Activated T-helper 2 cell treated with anti-CD3 and anti-CD28 coated beads, Interferon-gamma antibody, Interleukin-2, Interleukin-4, amounts not matched to agents 10 μg/mL and 5 μg/mL and 100 μg/mL, durations not matched to agents 14 hours and 24 hours and 36 hours (primary cell): ENCODE measurements at regions of chr17 and their contacts with region 1.

Region 1: DNA sequence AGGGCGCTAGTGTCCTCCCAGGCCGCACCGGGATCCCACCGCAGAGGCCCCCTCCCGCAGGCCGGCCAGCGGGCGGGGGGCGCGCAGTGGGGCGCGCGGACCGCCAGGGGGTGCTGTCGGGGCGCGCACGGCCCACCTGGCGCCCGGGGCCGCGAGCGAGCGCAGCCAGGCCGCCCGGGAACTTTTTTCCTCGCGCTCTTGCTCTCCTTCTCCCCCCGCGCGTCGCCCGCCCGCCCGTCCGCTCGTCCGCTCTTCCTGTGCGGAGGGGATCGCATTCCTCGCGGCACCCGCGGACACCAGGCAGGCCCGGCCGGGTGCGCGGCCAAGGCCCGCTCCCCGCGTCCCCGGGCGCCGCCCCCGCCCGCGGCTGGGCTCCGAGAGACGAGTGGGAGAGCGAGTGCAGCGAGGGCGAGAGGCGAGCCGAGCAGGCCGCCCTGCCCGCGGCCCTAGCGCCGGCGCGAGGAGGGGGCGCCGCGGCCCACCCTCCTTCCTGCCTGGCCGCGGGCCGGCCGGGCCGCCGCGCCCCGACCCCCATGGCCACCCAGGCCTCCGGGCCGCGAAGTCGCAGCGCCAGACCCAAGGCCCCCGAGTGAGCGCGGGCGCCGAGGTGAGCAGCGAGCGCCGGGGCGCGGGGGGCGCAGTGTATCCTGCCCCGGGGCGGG is at the start of gene RAI1:
- DNase-seq: peak; percentile 68
- H3K4me3 Mint-ChIP-seq: peak within 1 kb of the TSS; percentile 85
- H3K27ac Mint-ChIP-seq: peak within 1 kb of the TSS; percentile 85
- H3K4me1 Mint-ChIP-seq: peaks cover 28% of the 10 kb centered on the region
- H3K27me3 Mint-ChIP-seq: peaks cover 11% of the 10 kb centered on the region
- total RNA-seq, gene RAI1: 33.5 and 36.5 TPM in 2 replicates

Region 2: GRCh38 chr17:17580662-17581470 is 100.5 kb before region 1 on chr17:
- intact Hi-C with region 1: no loop called
- DNase-seq: no peak
- H3K4me3 Mint-ChIP-seq: no peak overlapping the region
- H3K27ac Mint-ChIP-seq: no peak overlapping the region
- H3K4me1 Mint-ChIP-seq: no peaks in the 10 kb centered on the region
- H3K27me3 Mint-ChIP-seq: no peaks in the 10 kb centered on the region

Region 3: GRCh38 chr17:17605729-17606088 is 75.6 kb before region 1 on chr17:
- intact Hi-C with region 1: no loop called
- DNase-seq: no peak
- H3K4me3 Mint-ChIP-seq: no peak overlapping the region
- H3K27ac Mint-ChIP-seq: no peak overlapping the region
- H3K4me1 Mint-ChIP-seq: no peaks in the 10 kb centered on the region
- H3K27me3 Mint-ChIP-seq: no peaks in the 10 kb centered on the region

Region 4: GRCh38 chr17:17648762-17649161 is 32.6 kb before region 1 on chr17:
- intact Hi-C with region 1: no loop called
- DNase-seq: no peak
- H3K4me3 Mint-ChIP-seq: no peak overlapping the region
- H3K27ac Mint-ChIP-seq: no peak overlapping the region
- H3K4me1 Mint-ChIP-seq: no peaks in the 10 kb centered on the region
- H3K27me3 Mint-ChIP-seq: no peaks in the 10 kb centered on the region

Region 5: GRCh38 chr17:17723354-17724261 is 42.3 kb after region 1 on chr17:
- intact Hi-C with region 1: loop called (anchors 5 kb)
- DNase-seq: no peak
- H3K4me3 Mint-ChIP-seq: peak overlapping the region; percentile 82
- H3K27ac Mint-ChIP-seq: no peak overlapping the region
- H3K4me1 Mint-ChIP-seq: peaks cover 25% of the 10 kb centered on the region
- H3K27me3 Mint-ChIP-seq: peaks cover 31% of the 10 kb centered on the region

Region 6: DNA sequence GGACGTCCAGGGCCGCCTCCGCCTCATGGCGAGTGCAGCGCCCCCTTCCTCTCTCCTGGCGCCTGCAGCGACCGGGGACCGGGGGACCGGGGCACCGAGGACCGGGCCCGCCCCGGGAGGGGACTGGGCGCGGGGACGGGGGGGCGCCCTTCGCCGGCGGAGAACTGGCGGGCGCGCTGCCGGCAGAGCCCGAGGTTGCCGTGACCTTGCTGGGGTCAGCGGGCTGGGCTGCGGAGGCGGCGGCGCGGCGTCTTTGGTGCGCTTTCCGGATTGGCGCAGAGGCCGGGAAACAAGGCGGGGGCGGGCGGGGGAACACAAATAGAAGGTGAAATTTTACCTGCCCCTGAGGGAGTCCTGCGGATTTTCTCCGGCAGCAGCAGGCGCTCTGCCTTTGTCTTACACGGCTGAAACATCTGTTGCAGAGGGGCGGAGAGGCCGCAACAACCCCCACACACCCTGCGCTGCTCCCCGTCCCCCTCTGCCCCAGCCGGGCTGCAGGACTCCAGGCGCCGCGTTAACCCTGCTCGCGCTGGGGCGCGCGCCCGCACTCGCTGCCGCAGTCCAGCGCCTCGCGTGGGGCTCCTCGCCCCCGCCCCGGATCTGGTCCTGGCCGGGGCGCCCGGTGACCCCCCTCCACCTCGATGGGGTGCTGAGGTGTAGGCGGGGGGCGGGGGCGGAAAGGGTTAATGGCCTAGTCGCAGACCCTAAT is 102.0 kb after region 1 on chr17:
- intact Hi-C with region 1: loop called (anchors 2 kb)
- DNase-seq: peak; percentile 53
- H3K4me3 Mint-ChIP-seq: peak overlapping the region; percentile 45
- H3K27ac Mint-ChIP-seq: no peak overlapping the region
- H3K4me1 Mint-ChIP-seq: peaks cover 6% of the 10 kb centered on the region
- H3K27me3 Mint-ChIP-seq: peaks cover 21% of the 10 kb centered on the region

Region 7: DNA sequence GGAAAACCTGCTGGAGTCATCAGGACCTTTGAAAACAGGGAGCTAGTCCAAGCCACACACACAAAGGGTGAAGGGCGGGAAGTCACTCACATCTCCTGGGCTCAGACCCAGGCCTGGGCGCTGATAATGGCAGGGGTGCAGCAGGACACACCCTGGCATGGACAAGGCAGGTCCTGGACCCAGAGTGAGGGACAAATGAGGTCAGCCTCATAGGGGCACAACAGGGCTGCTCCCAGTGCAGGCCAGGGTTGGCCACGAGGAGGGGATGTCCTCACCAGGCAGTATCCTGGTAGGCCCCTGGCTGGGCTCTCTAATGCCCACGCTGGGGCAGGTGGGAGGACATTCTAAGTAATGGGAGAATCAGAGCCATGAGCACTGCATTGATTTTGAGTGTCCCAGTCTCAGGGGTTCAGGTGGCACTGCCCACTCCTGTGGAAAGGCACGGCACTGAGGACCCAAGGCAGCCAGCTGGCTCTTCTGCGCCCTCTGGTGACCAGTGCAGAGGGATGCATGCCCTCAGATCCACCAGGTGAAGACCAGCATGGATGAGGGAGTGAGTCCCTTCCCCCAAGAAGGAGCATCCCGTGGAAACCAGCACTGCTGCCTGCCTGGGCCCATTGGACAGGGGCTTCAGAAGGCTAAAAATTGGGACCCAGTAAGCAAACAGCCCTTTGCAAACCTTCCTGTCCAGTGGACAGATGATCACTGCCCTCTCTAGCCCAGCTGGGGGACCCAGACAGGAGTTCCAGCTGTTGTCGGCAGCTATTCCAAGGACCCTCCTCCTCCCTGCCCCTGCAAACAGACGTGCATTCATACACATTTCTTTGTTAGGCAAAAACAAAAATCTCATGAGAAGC is 178.8 kb after region 1 on chr17:
- intact Hi-C with region 1: loop called (anchors 2 kb)
- DNase-seq: peak; percentile 50
- H3K4me3 Mint-ChIP-seq: no peak overlapping the region
- H3K27ac Mint-ChIP-seq: no peak overlapping the region
- H3K4me1 Mint-ChIP-seq: peaks cover 20% of the 10 kb centered on the region
- H3K27me3 Mint-ChIP-seq: no peaks in the 10 kb centered on the region

Region 8: DNA sequence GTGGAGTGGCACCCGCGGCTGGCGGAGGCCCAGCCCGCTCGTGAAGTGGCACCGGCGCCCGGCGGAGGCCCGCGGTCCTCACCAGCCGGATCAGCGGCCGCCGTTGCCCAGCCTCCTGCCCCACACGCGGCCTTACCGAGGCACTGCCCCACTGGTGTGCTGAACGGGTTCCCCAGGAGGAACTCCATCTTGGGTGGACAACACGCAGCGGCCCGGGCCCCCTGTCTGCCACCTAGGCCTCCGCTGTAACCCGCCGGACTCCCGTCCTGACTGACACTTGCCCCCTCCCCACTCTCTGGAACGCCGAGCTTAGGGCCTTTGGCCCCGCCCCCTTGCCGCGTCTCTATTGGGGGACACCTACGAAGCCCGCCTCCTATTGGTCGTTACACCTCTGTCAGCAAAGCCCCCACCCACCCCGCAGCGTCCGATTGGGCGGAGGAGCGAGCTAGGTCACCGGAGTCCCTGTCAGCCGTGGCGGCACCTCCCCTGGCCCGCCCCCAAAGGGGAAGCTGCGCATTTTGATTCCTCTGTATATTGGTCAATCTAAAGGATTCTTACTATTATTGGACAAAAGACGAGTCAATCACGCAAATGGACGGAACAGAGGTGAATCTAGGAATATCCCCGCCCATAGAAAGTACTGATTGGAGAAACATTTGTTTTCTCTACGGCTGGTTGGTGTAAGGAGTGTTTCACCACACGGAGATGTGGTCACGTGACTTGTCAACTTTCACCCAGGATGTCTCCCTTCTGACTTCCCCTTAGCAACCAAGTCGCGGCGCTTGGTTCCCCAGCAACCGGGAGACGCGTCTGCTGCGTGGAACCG is 291.0 kb after region 1 on chr17 and contains the starts of genes DRC3 and TOM1L2:
- intact Hi-C with region 1: loop called (anchors 5 kb)
- DNase-seq: peak; percentile 100
- H3K4me3 Mint-ChIP-seq: peak within 1 kb of the TSS; percentile 91
- H3K27ac Mint-ChIP-seq: peak within 1 kb of the TSS; percentile 80
- H3K4me1 Mint-ChIP-seq: peaks cover 27% of the 10 kb centered on the region
- H3K27me3 Mint-ChIP-seq: no peaks in the 10 kb centered on the region
- total RNA-seq, gene DRC3: not detected in 2 replicates
- total RNA-seq, gene TOM1L2: 9.4 and 13.4 TPM in 2 replicates